ENCODE measurements at regions of chr19 and their contacts with region 1.

Region 1: GRCh38 chr19:45178262-45179071 is at the start of gene BLOC1S3:
- DNase-seq: peak; percentile 100
- H3K4me3 ChIP-seq: peak within 1 kb of the TSS; percentile 67 to 92 (median 88)
- H3K27ac ChIP-seq: peak within 1 kb of the TSS; percentile 95
- H3K4me1 ChIP-seq: peaks cover 25% of the 10 kb centered on the region
- H3K27me3 ChIP-seq: no peaks in the 10 kb centered on the region
- CTCF ChIP-seq: peak; percentile 21 to 41
- total RNA-seq, gene BLOC1S3: 7.8 to 14.4 TPM

Region 2: GRCh38 chr19:44890366-44891015 is 288.0 kb before region 1 on chr19:
- CTCF ChIA-PET with region 1: no interaction called
- dilution Hi-C with region 1: no loop called
- in situ Hi-C with region 1: no loop called
- intact Hi-C with region 1: loop called (anchors 1 kb)
- DNase-seq: peak; percentile 100
- H3K4me3 ChIP-seq: peak overlapping the region; percentile 36 to 51 (median 43)
- H3K27ac ChIP-seq: peak overlapping the region; percentile 84
- H3K4me1 ChIP-seq: peaks cover 16% of the 10 kb centered on the region
- H3K27me3 ChIP-seq: no peaks in the 10 kb centered on the region
- CTCF ChIP-seq: no peak

Region 3: GRCh38 chr19:44960906-44961728 is 217.3 kb before region 1 on chr19:
- CTCF ChIA-PET with region 1: no interaction called
- dilution Hi-C with region 1: no loop called
- in situ Hi-C with region 1: no loop called
- intact Hi-C with region 1: no loop called
- DNase-seq: no peak
- H3K4me3 ChIP-seq: no peak overlapping the region
- H3K27ac ChIP-seq: no peak overlapping the region
- H3K4me1 ChIP-seq: peaks cover 14% of the 10 kb centered on the region
- H3K27me3 ChIP-seq: no peaks in the 10 kb centered on the region
- CTCF ChIP-seq: no peak

Region 4: DNA sequence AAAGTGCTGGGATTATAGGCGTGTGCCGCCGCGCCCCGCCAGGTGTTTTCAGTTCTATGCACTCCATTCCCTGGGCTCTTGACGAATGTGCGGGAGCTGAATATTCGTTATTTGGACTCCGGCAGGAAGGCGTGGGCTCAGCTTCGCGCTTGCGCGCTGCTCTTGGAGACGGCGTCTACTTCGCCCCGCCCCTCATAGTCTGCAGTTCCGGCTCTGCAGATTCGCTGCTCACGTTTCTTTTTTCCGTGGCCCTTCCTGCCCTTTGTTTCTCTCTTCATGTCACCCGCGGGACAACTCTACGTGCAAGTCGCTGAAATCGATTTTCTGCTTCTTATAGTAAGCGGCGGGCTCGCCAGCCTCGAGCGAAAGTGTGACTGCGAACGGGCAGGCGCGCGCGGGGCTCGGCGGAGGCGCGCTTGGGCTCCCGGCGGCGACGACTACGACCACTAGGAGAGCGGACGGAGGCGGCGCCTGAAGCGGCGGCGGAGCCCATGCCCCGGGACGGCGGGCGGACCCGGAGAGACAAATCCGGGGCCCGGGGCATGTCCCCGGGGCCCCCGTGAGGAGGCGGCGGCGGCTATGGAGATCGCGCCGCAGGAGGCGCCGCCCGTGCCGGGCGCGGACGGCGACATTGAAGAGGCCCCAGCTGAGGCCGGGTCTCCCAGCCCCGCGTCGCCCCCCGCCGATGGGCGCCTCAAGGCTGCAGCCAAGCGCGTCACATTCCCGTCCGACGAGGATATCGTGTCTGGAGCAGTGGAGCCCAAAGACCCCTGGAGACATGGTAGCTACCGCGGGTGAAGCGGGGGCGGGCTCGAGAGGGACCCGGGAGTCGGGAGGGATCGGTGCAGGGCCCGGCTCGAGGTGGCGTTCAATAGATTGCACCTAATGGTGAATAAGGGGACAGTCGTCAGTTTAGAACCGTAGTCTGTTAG is 85.5 kb before region 1 on chr19 and contains the start of gene PPP1R37:
- CTCF ChIA-PET with region 1: interaction called, 3 read pairs
- dilution Hi-C with region 1: no loop called
- in situ Hi-C with region 1: loop called in 1 of 2 experiments (anchors 5 kb)
- intact Hi-C with region 1: loop called (anchors 1 kb)
- DNase-seq: peak; percentile 97
- H3K4me3 ChIP-seq: peak within 1 kb of the TSS; percentile 89 to 97 (median 95)
- H3K27ac ChIP-seq: peak within 1 kb of the TSS; percentile 94
- H3K4me1 ChIP-seq: peaks cover 31% of the 10 kb centered on the region
- H3K27me3 ChIP-seq: no peaks in the 10 kb centered on the region
- CTCF ChIP-seq: peak in 1 of 2 donors; percentile 31
- total RNA-seq, gene PPP1R37: 32.9 to 48.0 TPM

Region 5: GRCh38 chr19:45150741-45151303 is 27.6 kb before region 1 on chr19:
- CTCF ChIA-PET with region 1: no interaction called
- dilution Hi-C with region 1: no loop called
- in situ Hi-C with region 1: no loop called
- intact Hi-C with region 1: loop called (anchors 2 kb)
- DNase-seq: no peak
- H3K4me3 ChIP-seq: no peak overlapping the region
- H3K27ac ChIP-seq: no peak overlapping the region
- H3K4me1 ChIP-seq: peaks cover 38% of the 10 kb centered on the region
- H3K27me3 ChIP-seq: no peaks in the 10 kb centered on the region
- CTCF ChIP-seq: no peak

Region 6: DNA sequence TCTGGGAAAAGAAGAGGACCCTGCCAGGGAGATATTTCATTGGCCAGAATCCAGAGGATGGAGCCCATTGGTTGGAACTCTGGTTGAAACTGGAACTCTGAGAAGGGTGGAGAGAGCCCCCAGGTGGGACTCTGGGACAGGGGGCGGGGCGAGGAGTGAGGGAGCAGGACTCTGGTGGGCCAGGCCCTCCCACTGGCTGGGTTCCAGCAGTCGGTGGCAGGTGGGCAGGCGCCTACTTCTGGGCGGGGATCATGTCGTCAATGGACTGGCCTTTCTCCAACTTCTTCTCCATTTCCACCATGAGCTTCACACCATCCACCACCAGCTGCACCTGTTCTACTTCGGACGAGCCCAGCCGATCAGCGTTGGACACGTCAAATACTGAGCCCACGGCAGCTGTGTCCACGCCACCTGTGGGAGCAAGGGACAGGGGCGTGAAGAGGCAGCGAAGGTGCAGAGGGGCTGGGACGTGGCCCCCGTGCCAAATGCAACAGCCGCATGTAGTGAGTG is 128.1 kb after region 1 on chr19:
- CTCF ChIA-PET with region 1: no interaction called
- dilution Hi-C with region 1: loop called (anchors 5 kb)
- in situ Hi-C with region 1: no loop called
- intact Hi-C with region 1: no loop called
- DNase-seq: no peak
- H3K4me3 ChIP-seq: no peak overlapping the region
- H3K27ac ChIP-seq: no peak overlapping the region
- H3K4me1 ChIP-seq: peaks cover 13% of the 10 kb centered on the region
- H3K27me3 ChIP-seq: no peaks in the 10 kb centered on the region
- CTCF ChIP-seq: no peak

Region 7: GRCh38 chr19:45478454-45479238 is 300.2 kb after region 1 on chr19:
- CTCF ChIA-PET with region 1: no interaction called
- dilution Hi-C with region 1: no loop called
- in situ Hi-C with region 1: loop called in 1 of 2 experiments (anchors 25 kb)
- intact Hi-C with region 1: loop called (anchors 5 kb)
- DNase-seq: peak; percentile 87
- H3K4me3 ChIP-seq: peak overlapping the region; percentile 47 to 58 (median 56)
- H3K27ac ChIP-seq: peak overlapping the region; percentile 99
- H3K4me1 ChIP-seq: peaks cover 5% of the 10 kb centered on the region
- H3K27me3 ChIP-seq: no peaks in the 10 kb centered on the region
- CTCF ChIP-seq: peak; percentile 96 to 98

Measured in mammary epithelial cell (primary cell).